ENCODE measurements at regions of chr9 and their contacts with region 1.

Region 1: GRCh38 chr9:120755827-120756434 is 37.3 kb downstream of the FBXW2 start:
- DNase-seq: peak; percentile 50
- H3K4me3 ChIP-seq: no peak overlapping the region
- H3K27ac ChIP-seq: no peak overlapping the region
- H3K4me1 ChIP-seq: no peaks in the 10 kb centered on the region
- H3K27me3 ChIP-seq: no peaks in the 10 kb centered on the region

Region 2: DNA sequence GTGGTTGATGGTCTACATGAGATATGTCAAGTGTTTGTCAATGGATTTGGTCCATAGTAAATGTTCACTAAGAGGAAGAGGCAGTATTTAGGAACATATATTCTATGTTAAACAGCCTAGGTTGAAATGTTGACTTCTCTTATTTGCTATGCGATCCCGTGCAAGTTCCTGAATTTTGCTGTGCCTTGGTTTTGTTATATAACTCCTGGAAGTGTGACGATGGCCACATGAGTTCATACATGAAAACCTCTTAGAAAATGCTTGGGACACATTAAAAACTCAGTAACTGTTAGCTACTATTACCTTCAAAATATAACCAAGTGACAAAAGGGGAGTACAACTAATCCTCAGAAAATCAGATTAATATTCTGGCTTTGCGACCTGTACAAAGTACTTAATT is 59.1 kb after region 1 on chr9:
- in situ Hi-C with region 1: no loop called
- DNase-seq: no peak
- H3K4me3 ChIP-seq: no peak overlapping the region
- H3K27ac ChIP-seq: no peak overlapping the region
- H3K4me1 ChIP-seq: peaks cover 5% of the 10 kb centered on the region; the same call in 1 of the 2 replicates
- H3K27me3 ChIP-seq: no peaks in the 10 kb centered on the region

Region 3: DNA sequence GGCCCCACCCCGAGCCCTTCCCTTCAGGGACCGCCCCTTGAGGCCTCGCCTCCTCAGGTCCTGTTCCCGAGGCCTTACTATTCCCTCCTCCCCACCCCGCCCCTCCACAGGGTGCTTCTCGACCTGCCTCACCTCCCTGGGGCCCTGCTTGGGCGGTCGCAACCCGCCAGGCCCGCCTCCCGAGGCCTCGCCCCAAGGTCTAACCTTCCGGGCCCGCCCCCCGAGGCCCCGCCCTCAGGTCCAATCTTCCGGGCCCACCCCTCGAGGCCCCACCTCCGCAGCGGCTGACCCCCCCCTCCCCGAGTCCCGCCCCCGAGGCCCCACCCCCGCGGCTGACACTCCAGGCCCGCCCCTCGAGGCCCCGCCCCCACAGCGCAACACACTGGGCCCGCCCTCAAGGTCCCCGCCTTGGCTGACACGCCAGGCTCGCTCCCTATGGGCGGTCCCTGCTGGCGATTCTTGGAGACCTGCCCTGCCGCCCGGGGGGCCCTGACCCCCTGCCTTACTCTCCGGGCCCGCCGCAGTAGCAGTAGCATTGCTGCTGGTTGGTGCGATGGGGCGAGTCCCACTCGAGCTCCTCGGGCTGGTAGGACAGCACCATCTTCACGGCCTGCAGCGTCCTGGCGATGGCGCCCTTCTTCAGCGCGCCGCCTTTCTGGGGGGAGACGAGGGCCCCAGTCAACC is 112.9 kb after region 1 on chr9:
- in situ Hi-C with region 1: no loop called
- DNase-seq: peak; percentile 98
- H3K4me3 ChIP-seq: peak overlapping the region; percentile 79
- H3K27ac ChIP-seq: peak overlapping the region; percentile 67
- H3K4me1 ChIP-seq: peaks cover 3% of the 10 kb centered on the region; the same call in 1 of the 2 replicates
- H3K27me3 ChIP-seq: no peaks in the 10 kb centered on the region

Region 4: DNA sequence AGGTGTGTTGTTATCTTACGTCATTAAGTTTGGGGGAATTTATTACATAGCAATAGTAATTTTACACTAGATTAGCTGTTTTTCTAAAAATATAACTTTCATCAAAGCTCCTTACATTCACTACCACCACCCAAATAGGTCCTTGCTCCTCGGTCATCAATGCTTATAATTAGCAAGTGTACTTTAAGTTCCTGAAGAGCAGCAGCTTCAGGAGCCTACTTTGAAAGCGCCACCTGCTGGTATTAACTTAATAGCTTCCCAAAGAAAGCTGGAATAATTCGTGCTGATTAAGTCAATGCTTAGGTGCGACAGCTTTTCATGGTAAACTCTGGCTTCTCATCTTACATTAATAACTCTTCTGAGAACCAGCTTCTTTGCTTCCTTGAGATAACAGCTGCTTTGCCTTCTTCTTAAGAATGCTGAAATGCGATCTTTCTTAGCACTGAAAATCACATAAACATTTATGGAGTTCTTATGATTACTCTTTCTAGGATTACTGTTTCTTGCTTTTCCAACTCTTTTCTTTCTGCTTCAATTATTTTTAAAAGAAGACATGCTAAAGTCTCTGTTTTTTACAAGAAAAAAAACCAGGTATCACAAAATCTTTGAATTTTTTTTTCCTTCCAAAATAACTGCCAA is 304.2 kb after region 1 on chr9:
- in situ Hi-C with region 1: loop called (anchors 10 kb)
- DNase-seq: peak; percentile 84
- H3K4me3 ChIP-seq: peak overlapping the region; percentile 34; the same call in 1 of the 2 replicates
- H3K27ac ChIP-seq: no peak overlapping the region
- H3K4me1 ChIP-seq: no peaks in the 10 kb centered on the region
- H3K27me3 ChIP-seq: no peaks in the 10 kb centered on the region